Heart right ventricle (tissue), 16 donors: ENCODE measurements at regions of chr2 and their contacts with region 1.

Region 1: DNA sequence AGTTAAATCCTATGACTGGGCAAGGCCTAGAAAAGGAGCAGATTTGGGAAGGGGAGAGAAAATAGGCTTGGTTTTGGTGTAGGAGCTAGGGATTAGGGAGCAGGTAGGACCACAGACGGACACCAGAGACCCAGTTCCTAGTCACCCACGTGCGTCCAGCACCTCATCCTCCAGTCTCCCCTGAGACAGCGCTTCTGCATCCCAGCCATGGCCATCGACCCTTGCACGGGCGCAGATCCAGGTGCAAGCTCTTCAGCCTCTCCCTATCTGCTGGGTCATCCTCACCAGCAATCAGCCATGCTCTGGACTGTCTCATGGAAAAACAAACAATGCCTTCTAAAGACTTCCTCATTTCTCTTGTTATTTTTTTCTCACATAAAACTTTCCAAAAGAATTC is 246.8 kb upstream of the RAB6C start:
- DNase-seq: no peak
- ATAC-seq: no peak
- H3K4me3 ChIP-seq: no peak overlapping the region
- H3K27ac ChIP-seq: no peak overlapping the region
- H3K4me1 ChIP-seq: no peaks in the 10 kb centered on the region
- H3K27me3 ChIP-seq: peaks cover 0 to 8% (median 5%) of the 10 kb centered on the region in 7 donors
- CTCF ChIP-seq: no peak

Region 2: GRCh38 chr2:129699781-129700573 is 32.7 kb before region 1 on chr2:
- intact Hi-C with region 1: loop called in 1 of 10 experiments (anchors 1 kb)
- DNase-seq: no peak
- ATAC-seq: peak in 1 of 8 donors; percentile 48
- H3K4me3 ChIP-seq: no peak overlapping the region
- H3K27ac ChIP-seq: no peak overlapping the region
- H3K4me1 ChIP-seq: no peaks in the 10 kb centered on the region
- H3K27me3 ChIP-seq: no peaks in the 10 kb centered on the region
- CTCF ChIP-seq: no peak

Region 3: DNA sequence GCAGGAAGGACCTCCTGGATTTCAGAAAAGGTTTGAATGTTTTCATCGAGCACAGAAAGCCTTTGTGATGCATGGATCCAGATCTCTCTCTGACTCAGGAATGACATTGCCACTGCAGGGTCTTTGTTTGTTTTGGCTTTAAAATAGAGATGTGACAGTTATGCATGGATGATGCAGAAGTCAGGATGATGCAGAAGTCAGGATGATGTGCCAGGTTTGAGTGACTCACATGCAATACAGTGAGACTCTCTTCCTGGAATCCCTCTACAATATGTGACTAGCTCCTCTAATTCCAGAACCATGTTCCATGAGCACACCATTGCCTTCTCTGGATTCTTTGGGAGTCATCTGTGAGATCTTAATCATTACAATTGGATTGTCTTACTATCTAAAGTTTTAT is 68.9 kb after region 1 on chr2:
- intact Hi-C with region 1: no loop called
- DNase-seq: no peak
- ATAC-seq: no peak
- H3K4me3 ChIP-seq: no peak overlapping the region
- H3K27ac ChIP-seq: no peak overlapping the region
- H3K4me1 ChIP-seq: no peaks in the 10 kb centered on the region
- H3K27me3 ChIP-seq: peaks cover 0 to 44% (median 20%) of the 10 kb centered on the region in 7 donors
- CTCF ChIP-seq: no peak